Ascending aorta (tissue), 2 donors: ENCODE measurements at regions of chr4 and their contacts with region 1.

Region 1: DNA sequence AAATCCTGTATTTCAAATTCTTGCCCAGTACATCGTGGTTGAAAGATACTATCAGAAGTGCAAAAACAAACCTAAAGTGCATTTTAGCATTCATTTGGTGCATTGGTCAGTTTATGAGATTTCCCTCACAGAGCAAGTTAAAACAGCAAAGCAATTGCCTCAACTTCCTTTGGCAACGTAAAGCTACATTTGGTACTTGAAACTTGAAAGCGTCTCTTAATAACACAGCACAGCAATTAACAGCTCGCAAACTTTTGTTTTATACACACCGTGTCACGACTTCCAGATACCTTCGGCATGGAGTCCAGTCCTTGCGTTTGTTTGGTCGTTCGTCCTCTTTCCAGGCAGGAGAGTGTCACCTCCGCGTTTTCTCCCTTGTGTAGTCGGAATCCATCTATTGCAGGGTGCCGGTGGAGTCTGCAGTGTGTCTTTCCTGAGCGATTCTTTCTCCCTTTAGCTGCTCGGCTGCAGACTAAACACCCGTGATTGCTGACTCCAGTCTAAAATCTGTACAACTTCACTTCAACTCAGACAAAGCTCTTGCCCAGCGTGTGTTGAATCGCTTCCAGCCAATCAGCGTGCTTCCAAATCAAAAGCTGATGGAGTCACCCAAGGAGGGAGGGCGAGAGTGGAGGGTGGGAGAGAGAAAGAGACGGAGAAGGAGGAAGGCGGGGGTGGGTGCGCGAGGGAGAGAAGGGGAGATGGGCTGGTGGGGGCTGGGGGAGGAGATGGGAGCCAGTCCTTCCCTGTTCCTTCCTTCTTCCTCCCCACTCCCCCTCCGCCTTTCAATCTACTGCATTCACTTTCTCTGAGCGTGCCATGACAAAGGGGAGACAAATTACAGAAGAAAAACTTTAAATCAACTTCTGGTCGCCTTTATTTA is at the start of gene PCDH18:
- DNase-seq: peak; percentile 62 to 96
- H3K4me3 ChIP-seq: peak within 1 kb of the TSS; percentile 73 to 74
- H3K27ac ChIP-seq: peak within 1 kb of the TSS; percentile 82 to 88
- H3K4me1 ChIP-seq: peaks cover 0 to 4% of the 10 kb centered on the region in 2 donors
- H3K27me3 ChIP-seq: no peaks in the 10 kb centered on the region
- CTCF ChIP-seq: no peak
- total RNA-seq, gene PCDH18: 31.6 TPM

Region 2: DNA sequence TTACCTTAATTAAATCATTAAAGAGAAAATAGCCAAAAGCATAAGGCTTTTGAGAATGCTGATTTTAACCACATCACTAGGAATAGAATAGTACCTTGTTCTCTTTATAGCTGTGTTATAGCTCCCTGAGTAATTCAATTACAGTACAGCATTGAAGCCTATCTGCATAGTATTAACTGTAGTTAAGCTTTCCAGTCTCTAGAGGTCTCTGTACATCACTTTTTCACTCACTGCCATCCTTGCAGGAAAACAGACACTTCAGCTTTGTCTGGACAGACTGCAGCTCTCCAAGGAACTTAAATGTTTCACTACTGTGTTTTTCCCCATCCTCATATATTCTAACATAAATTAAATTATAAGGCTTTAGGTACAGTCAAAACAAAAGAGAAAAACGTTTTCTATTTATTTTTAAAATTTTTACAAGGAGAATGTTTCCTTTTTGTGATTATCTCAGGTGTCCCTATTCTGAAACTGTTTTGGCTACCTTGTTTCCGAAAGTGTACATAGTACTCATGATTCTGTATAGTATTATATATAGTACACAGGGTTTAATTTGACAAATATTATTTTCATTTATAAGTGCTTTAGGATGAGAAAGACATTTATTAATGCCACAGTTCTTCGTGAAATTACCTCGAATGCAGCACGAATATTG is 407.8 kb before region 1 on chr4:
- intact Hi-C with region 1: loop called (anchors 2 kb)
- DNase-seq: no peak
- H3K4me3 ChIP-seq: peak overlapping the region; percentile 46 to 56
- H3K27ac ChIP-seq: no peak overlapping the region
- H3K4me1 ChIP-seq: no peaks in the 10 kb centered on the region
- H3K27me3 ChIP-seq: no peaks in the 10 kb centered on the region
- CTCF ChIP-seq: peak; percentile 50 to 75 (median 69)

Region 3: DNA sequence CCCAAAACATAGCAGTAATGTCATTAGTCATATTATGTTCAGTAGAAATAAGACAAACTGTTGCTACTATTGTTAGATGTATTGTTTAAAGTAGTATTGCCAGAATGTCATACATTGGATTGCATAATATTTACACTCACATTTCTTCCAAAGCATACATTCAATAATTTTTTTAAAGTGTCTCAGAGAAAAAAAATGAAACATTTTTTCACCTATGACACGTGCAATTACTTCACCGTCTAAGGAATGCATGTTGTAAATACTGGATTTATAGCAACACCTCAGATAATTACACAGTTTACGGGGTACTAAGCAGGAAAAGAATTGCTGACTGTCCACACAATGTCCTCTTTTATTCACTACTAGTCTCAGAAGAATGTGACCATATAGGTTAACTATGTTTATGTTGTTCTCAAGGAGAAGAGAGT is 162.0 kb before region 1 on chr4:
- intact Hi-C with region 1: loop called (anchors 2 kb)
- DNase-seq: no peak
- H3K4me3 ChIP-seq: no peak overlapping the region
- H3K27ac ChIP-seq: peak overlapping the region; percentile 8 to 32
- H3K4me1 ChIP-seq: peaks cover 0 to 14% of the 10 kb centered on the region in 2 donors
- H3K27me3 ChIP-seq: no peaks in the 10 kb centered on the region
- CTCF ChIP-seq: no peak

Region 4: DNA sequence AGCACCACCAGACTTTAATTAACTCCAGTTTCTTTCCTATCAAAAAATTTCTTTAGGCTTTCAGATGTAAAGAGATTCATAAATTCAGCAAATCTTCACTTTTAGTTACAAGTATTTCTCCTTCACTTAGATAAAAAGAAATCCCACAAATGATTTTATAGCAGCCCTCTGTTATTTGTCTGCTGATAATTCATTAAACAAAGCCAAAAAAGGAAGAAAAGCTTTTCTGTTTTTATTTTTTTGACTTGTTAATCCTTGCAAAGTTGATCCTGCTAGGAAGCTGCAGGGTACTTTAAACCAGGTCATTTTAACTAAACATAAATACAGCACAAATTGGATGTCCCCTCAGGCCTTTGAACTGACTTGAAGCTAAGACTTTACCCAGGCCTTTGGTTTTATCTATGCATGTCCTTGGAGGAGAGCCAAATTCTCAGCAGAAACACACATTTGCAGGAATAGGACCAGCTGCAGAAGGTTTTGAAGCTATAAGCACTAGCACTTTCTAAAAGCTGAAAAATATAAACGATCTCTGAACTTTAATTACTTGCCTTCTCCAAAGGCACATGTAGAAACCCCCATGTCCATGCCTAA is 57.4 kb before region 1 on chr4:
- intact Hi-C with region 1: no loop called
- DNase-seq: no peak
- H3K4me3 ChIP-seq: no peak overlapping the region
- H3K27ac ChIP-seq: no peak overlapping the region
- H3K4me1 ChIP-seq: no peaks in the 10 kb centered on the region
- H3K27me3 ChIP-seq: no peaks in the 10 kb centered on the region
- CTCF ChIP-seq: no peak

Region 5: DNA sequence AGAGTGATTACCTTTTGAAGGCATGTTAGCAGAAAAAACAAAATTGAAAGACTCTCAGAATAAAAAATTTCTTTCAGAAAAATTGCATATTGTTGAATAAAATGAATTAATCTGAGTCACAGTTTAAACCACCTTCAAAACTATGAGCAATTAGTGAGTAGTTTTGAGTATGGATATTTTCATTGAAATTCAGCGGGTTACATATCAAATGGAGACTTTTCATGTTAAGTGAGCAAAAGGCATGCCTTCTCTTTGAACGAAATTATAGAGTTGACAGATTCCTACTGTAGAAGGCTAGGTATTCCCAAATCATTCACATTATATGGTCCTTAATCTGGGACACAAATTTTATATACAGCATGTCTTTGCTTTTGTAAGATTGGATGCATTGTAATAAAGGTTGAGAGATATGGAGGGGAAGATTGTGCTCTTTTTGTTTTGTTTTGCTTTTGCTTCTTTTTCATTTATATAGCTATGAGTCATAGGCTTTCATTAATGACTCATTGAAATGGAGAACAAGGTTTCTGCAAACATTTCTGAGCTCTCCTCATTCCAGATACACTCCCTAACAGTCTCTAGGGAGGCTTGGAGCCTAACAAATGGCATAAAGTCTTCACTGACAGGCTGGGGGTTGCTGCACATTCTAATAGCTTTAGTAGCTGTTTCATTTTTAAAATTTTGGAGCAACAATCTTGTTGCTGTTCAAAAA is 21.5 kb before region 1 on chr4:
- intact Hi-C with region 1: loop called (anchors 2 kb)
- DNase-seq: no peak
- H3K4me3 ChIP-seq: peak overlapping the region in 1 of 2 donors; percentile 14
- H3K27ac ChIP-seq: peak overlapping the region; percentile 39 to 61
- H3K4me1 ChIP-seq: peaks cover 0 to 14% of the 10 kb centered on the region in 2 donors
- H3K27me3 ChIP-seq: no peaks in the 10 kb centered on the region
- CTCF ChIP-seq: no peak

Region 6: GRCh38 chr4:137819964-137820383 is 287.7 kb after region 1 on chr4:
- intact Hi-C with region 1: no loop called
- DNase-seq: no peak
- H3K4me3 ChIP-seq: no peak overlapping the region
- H3K27ac ChIP-seq: no peak overlapping the region
- H3K4me1 ChIP-seq: no peaks in the 10 kb centered on the region
- H3K27me3 ChIP-seq: no peaks in the 10 kb centered on the region
- CTCF ChIP-seq: no peak

Region 7: GRCh38 chr4:137861682-137862081 is 329.5 kb after region 1 on chr4:
- intact Hi-C with region 1: loop called (anchors 5 kb)
- DNase-seq: no peak
- H3K4me3 ChIP-seq: no peak overlapping the region
- H3K27ac ChIP-seq: no peak overlapping the region
- H3K4me1 ChIP-seq: no peaks in the 10 kb centered on the region
- H3K27me3 ChIP-seq: no peaks in the 10 kb centered on the region
- CTCF ChIP-seq: peak; percentile 32 to 67 (median 55)